IMR-90 (cell line): ENCODE measurements at regions of chr11 and their contacts with region 1.

Region 1: GRCh38 chr11:363948-364761 is 5.1 kb upstream of the B4GALNT4 start:
- DNase-seq: no peak
- ATAC-seq: no peak
- H3K4me3 ChIP-seq: no peak overlapping the region
- H3K27ac ChIP-seq: no peak overlapping the region
- H3K4me1 ChIP-seq: peaks cover 4% of the 10 kb centered on the region
- H3K27me3 ChIP-seq: peaks cover 27% of the 10 kb centered on the region
- CTCF ChIP-seq: 0 out of 2 replicates have a peak, but pooled peaks have one; percentile 12
- POLR2A ChIP-seq: no peak
- RAD21 ChIP-seq: no peak

Region 2: DNA sequence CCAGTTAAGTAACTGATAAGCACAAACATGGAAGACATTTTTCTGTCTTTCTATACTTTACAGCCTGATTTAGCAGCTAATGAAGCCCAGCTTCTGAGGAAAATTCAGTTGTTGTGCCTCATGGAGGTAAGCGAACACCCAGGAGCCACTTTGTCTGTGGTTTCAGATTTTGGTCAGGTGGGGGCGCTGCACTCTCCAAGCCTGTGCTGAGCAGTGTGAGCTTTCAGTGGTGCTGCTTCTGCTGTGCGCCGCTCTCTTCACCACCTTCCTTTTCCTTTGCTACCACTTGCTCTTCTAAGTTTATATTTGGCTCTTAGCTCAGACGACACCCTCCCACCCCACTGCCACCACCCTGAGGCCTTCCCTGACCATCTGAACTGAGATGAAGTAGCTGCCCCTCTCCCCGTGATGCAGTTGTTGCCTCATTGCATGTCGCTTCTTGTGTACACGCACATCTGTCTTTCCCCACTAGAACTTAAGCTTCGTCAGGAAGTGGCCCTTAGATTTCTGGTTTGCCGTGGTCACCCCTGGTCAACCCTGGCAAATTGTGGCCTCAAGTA is 113.3 kb before region 1 on chr11:
- CTCF ChIA-PET with region 1: interaction called, 3 read pairs
- POLR2A ChIA-PET with region 1: no interaction called
- dilution Hi-C with region 1: no loop called
- in situ Hi-C with region 1: no loop called
- intact Hi-C with region 1: loop called (anchors 2 kb)
- DNase-seq: peak; percentile 42
- ATAC-seq: peak; percentile 92
- H3K4me3 ChIP-seq: no peak overlapping the region
- H3K27ac ChIP-seq: no peak overlapping the region
- H3K4me1 ChIP-seq: no peaks in the 10 kb centered on the region
- H3K27me3 ChIP-seq: no peaks in the 10 kb centered on the region
- CTCF ChIP-seq: peak; percentile 58
- POLR2A ChIP-seq: no peak
- RAD21 ChIP-seq: peak; percentile 67

Region 3: DNA sequence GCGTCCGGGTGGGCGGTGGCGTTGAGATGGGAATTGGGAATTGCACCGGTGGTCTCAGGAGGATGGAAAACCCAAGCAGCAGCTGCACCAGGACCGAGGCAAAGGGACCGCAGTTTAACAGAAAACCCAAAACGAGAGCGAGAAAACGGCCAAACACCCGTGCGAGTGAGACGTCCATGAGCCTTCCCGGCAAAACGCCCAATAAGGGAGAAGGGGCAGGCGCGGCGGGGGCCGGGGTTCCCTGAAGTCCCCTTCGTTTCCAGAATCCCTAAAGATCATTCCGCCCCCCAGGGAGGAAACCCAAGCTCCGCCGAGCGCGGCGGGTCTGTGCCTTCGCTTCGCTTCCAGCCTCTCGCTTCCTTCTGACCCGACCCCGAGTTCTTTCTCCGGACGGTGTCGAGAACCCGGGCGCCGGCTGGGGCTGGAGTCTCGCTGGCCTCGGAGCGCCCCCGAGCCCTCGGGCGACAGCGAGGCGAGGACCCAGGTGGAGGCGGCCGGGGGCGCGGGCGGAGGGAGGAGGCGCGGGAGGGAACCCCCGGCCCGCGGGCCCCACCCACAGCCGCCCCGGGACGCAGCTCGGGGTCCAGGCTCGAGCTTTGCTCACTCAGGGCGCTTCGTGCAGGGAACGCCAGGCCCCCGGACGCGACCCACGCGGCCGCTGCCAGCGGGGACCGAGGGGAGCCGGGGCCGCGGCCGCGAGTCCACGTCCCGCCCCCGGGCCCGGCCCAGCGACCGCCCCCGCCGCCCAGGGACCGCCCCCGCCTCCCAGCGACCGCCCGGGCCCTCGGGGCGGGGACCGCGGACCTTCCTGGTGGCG is 75.6 kb before region 1 on chr11 and contains the start of gene PGGHG:
- CTCF ChIA-PET with region 1: no interaction called
- POLR2A ChIA-PET with region 1: no interaction called
- dilution Hi-C with region 1: no loop called
- in situ Hi-C with region 1: no loop called
- intact Hi-C with region 1: no loop called
- DNase-seq: no peak
- ATAC-seq: peak; percentile 96
- H3K4me3 ChIP-seq: peak within 1 kb of the TSS; percentile 67
- H3K27ac ChIP-seq: no peak within 1 kb of the TSS; the same call in 1 of the 2 replicates
- H3K4me1 ChIP-seq: peaks cover 4% of the 10 kb centered on the region; the same call in 1 of the 2 replicates
- H3K27me3 ChIP-seq: peaks cover 21% of the 10 kb centered on the region
- CTCF ChIP-seq: no peak
- POLR2A ChIP-seq: no peak
- RAD21 ChIP-seq: no peak
- total RNA-seq, gene PGGHG: 1.4 and 1.8 TPM in 2 replicates